B cell (primary cell): ENCODE measurements at regions of chr4 and their contacts with region 1.

Region 1: GRCh38 chr4:82284858-82285805 is 88.7 kb downstream of the HNRNPD start:
- DNase-seq: peak; percentile 100
- ATAC-seq: peak; percentile 92
- H3K4me3 ChIP-seq: peak overlapping the region; percentile 28 to 74 (median 61)
- H3K4me3 Mint-ChIP-seq: peak overlapping the region; percentile 79
- H3K27ac ChIP-seq: peak overlapping the region; percentile 57 to 59
- H3K27ac Mint-ChIP-seq: peak overlapping the region; percentile 75
- H3K4me1 ChIP-seq: peaks cover 14% of the 10 kb centered on the region in 2 donors
- H3K4me1 Mint-ChIP-seq: peaks cover 19% of the 10 kb centered on the region
- H3K27me3 ChIP-seq: no peaks in the 10 kb centered on the region
- H3K27me3 Mint-ChIP-seq: no peaks in the 10 kb centered on the region
- CTCF ChIP-seq: peak; percentile 95

Region 2: DNA sequence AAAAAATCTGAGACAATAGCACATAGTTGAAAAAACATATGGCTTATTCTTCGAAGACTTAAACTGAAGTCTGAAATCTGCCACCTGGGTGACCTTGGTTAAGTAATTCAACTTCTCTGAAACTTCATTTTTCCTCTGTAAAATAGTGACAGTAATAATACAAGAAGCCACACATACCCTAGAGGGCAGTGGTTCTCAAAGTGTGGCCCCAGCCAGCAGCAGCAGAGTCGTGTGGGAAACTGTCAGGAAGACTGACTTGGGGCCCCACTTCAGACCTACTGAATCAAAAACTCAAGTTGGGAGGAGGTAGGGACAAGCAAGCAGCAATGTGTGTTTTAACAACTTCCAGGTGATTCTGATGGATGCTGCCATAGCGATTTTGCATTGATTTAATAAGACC is 161.2 kb before region 1 on chr4:
- CTCF ChIA-PET with region 1: no interaction called
- POLR2A ChIA-PET with region 1: no interaction called
- intact Hi-C with region 1: no loop called
- DNase-seq: peak; percentile 4
- ATAC-seq: no peak
- H3K4me3 ChIP-seq: no peak overlapping the region
- H3K4me3 Mint-ChIP-seq: no peak overlapping the region
- H3K27ac ChIP-seq: no peak overlapping the region
- H3K27ac Mint-ChIP-seq: no peak overlapping the region
- H3K4me1 ChIP-seq: no peaks in the 10 kb centered on the region
- H3K4me1 Mint-ChIP-seq: no peaks in the 10 kb centered on the region
- H3K27me3 ChIP-seq: no peaks in the 10 kb centered on the region
- H3K27me3 Mint-ChIP-seq: peaks cover 7% of the 10 kb centered on the region
- CTCF ChIP-seq: no peak

Region 3: GRCh38 chr4:82201805-82202641 is 83.1 kb before region 1 on chr4:
- CTCF ChIA-PET with region 1: interaction called, 3 read pairs
- POLR2A ChIA-PET with region 1: no interaction called
- intact Hi-C with region 1: loop called (anchors 5 kb)
- DNase-seq: peak; percentile 69
- ATAC-seq: peak; percentile 43
- H3K4me3 ChIP-seq: no peak overlapping the region
- H3K4me3 Mint-ChIP-seq: no peak overlapping the region
- H3K27ac ChIP-seq: no peak overlapping the region
- H3K27ac Mint-ChIP-seq: no peak overlapping the region
- H3K4me1 ChIP-seq: no peaks in the 10 kb centered on the region
- H3K4me1 Mint-ChIP-seq: no peaks in the 10 kb centered on the region
- H3K27me3 ChIP-seq: no peaks in the 10 kb centered on the region
- H3K27me3 Mint-ChIP-seq: peaks cover 16% of the 10 kb centered on the region
- CTCF ChIP-seq: peak; percentile 85

Region 4: GRCh38 chr4:82213485-82214417 is 71.4 kb before region 1 on chr4:
- CTCF ChIA-PET with region 1: no interaction called
- POLR2A ChIA-PET with region 1: no interaction called
- intact Hi-C with region 1: no loop called
- DNase-seq: no peak
- ATAC-seq: no peak
- H3K4me3 ChIP-seq: no peak overlapping the region
- H3K4me3 Mint-ChIP-seq: no peak overlapping the region
- H3K27ac ChIP-seq: no peak overlapping the region
- H3K27ac Mint-ChIP-seq: no peak overlapping the region
- H3K4me1 ChIP-seq: peaks cover 0 to 8% of the 10 kb centered on the region in 2 donors
- H3K4me1 Mint-ChIP-seq: peaks cover 4% of the 10 kb centered on the region
- H3K27me3 ChIP-seq: no peaks in the 10 kb centered on the region
- H3K27me3 Mint-ChIP-seq: no peaks in the 10 kb centered on the region
- CTCF ChIP-seq: no peak

Region 5: DNA sequence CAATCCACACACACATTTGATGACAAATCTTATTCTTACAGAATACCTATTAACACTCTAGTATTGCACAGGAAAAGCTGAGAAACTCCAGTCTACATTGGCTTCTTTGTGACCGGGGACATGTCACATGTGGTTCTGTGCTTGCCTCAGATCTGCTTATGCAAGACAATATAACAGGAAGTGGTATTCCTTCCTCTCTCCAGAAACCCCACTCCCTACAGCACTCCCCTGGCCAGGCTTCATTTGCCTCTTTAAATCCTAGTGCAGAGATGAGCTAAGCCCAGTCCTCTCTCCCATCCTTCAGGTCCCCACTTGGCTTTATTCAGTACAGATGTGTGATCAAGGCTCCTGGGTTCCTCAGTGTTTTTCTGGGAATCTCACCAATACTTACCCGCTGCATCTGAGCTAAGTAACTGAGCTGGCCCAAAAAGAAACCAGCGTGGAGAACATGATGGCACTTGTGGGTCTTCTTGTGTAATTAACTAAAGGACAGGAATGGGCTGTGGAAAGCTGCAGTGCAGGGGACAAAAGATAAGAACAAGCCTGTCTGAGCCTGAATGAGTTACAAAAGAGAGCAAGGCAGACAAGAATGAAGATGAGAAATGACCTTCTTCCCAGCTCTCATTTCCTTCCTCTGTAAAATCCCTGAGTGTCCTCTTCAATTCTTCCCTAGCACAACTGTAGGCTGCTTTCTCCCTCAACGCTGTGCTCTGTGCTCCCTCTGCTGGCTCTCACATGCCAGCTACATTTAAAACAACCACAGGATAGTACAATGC is 16.9 kb before region 1 on chr4:
- CTCF ChIA-PET with region 1: interaction called, 27 read pairs
- POLR2A ChIA-PET with region 1: interaction called, 5 read pairs
- intact Hi-C with region 1: no loop called
- DNase-seq: peak; percentile 65
- ATAC-seq: peak; percentile 88
- H3K4me3 ChIP-seq: no peak overlapping the region
- H3K4me3 Mint-ChIP-seq: no peak overlapping the region
- H3K27ac ChIP-seq: no peak overlapping the region
- H3K27ac Mint-ChIP-seq: no peak overlapping the region
- H3K4me1 ChIP-seq: peaks cover 29 to 34% of the 10 kb centered on the region in 2 donors
- H3K4me1 Mint-ChIP-seq: peaks cover 34% of the 10 kb centered on the region
- H3K27me3 ChIP-seq: no peaks in the 10 kb centered on the region
- H3K27me3 Mint-ChIP-seq: peaks cover 4% of the 10 kb centered on the region
- CTCF ChIP-seq: peak; percentile 74

Region 6: GRCh38 chr4:82373816-82374625 is 88.9 kb after region 1 on chr4 and contains the start of gene HNRNPD:
- CTCF ChIA-PET with region 1: interaction called, 14 read pairs
- POLR2A ChIA-PET with region 1: no interaction called
- intact Hi-C with region 1: loop called (anchors 1 kb)
- DNase-seq: peak; percentile 98
- ATAC-seq: peak; percentile 86
- H3K4me3 ChIP-seq: peak within 1 kb of the TSS; percentile 89 to 98 (median 95)
- H3K4me3 Mint-ChIP-seq: peak within 1 kb of the TSS; percentile 93
- H3K27ac ChIP-seq: peak within 1 kb of the TSS; percentile 98
- H3K27ac Mint-ChIP-seq: peak within 1 kb of the TSS; percentile 98
- H3K4me1 ChIP-seq: peaks cover 38% of the 10 kb centered on the region in 2 donors
- H3K4me1 Mint-ChIP-seq: peaks cover 51% of the 10 kb centered on the region
- H3K27me3 ChIP-seq: no peaks in the 10 kb centered on the region
- H3K27me3 Mint-ChIP-seq: no peaks in the 10 kb centered on the region
- CTCF ChIP-seq: no peak
- total RNA-seq, gene HNRNPD: 266 and 280 TPM in 2 replicates

Region 7: GRCh38 chr4:82403725-82404124 is 118.6 kb after region 1 on chr4:
- CTCF ChIA-PET with region 1: no interaction called
- POLR2A ChIA-PET with region 1: no interaction called
- intact Hi-C with region 1: no loop called
- DNase-seq: no peak
- ATAC-seq: no peak
- H3K4me3 ChIP-seq: no peak overlapping the region
- H3K4me3 Mint-ChIP-seq: no peak overlapping the region
- H3K27ac ChIP-seq: no peak overlapping the region
- H3K27ac Mint-ChIP-seq: no peak overlapping the region
- H3K4me1 ChIP-seq: peaks cover 0 to under 1% of the 10 kb centered on the region in 2 donors
- H3K4me1 Mint-ChIP-seq: no peaks in the 10 kb centered on the region
- H3K27me3 ChIP-seq: no peaks in the 10 kb centered on the region
- H3K27me3 Mint-ChIP-seq: peaks cover 3% of the 10 kb centered on the region
- CTCF ChIP-seq: no peak

Region 8: GRCh38 chr4:82900331-82901128 is 615.4 kb after region 1 on chr4 and contains the start of gene THAP9:
- CTCF ChIA-PET with region 1: no interaction called
- POLR2A ChIA-PET with region 1: no interaction called
- intact Hi-C with region 1: loop called (anchors 1 kb)
- DNase-seq: peak; percentile 99
- ATAC-seq: peak; percentile 90
- H3K4me3 ChIP-seq: peak within 1 kb of the TSS; percentile 73 to 92 (median 90)
- H3K4me3 Mint-ChIP-seq: no peak within 1 kb of the TSS
- H3K27ac ChIP-seq: peak within 1 kb of the TSS; percentile 97 to 98
- H3K27ac Mint-ChIP-seq: no peak within 1 kb of the TSS
- H3K4me1 ChIP-seq: peaks cover 22 to 27% of the 10 kb centered on the region in 2 donors
- H3K4me1 Mint-ChIP-seq: peaks cover 11% of the 10 kb centered on the region
- H3K27me3 ChIP-seq: no peaks in the 10 kb centered on the region
- H3K27me3 Mint-ChIP-seq: no peaks in the 10 kb centered on the region
- CTCF ChIP-seq: no peak
- total RNA-seq, gene THAP9: 6.8 and 7.8 TPM in 2 replicates

Region 9: GRCh38 chr4:83484500-83485461 is 1199.6 kb after region 1 on chr4 and contains the start of gene ABRAXAS1:
- CTCF ChIA-PET with region 1: no interaction called
- POLR2A ChIA-PET with region 1: no interaction called
- intact Hi-C with region 1: loop called (anchors 5 kb)
- DNase-seq: peak; percentile 97
- ATAC-seq: peak; percentile 97
- H3K4me3 ChIP-seq: peak within 1 kb of the TSS; percentile 71 to 87 (median 77)
- H3K4me3 Mint-ChIP-seq: peak within 1 kb of the TSS; percentile 99
- H3K27ac ChIP-seq: peak within 1 kb of the TSS; percentile 60 to 70
- H3K27ac Mint-ChIP-seq: peak within 1 kb of the TSS; percentile 95
- H3K4me1 ChIP-seq: peaks cover 10 to 17% of the 10 kb centered on the region in 2 donors
- H3K4me1 Mint-ChIP-seq: peaks cover 21% of the 10 kb centered on the region
- H3K27me3 ChIP-seq: no peaks in the 10 kb centered on the region
- H3K27me3 Mint-ChIP-seq: no peaks in the 10 kb centered on the region
- CTCF ChIP-seq: no peak
- total RNA-seq, gene ABRAXAS1: 34.4 and 38.4 TPM in 2 replicates